ENCODE measurements at regions of chr16 and their contacts with region 1.

Region 1: DNA sequence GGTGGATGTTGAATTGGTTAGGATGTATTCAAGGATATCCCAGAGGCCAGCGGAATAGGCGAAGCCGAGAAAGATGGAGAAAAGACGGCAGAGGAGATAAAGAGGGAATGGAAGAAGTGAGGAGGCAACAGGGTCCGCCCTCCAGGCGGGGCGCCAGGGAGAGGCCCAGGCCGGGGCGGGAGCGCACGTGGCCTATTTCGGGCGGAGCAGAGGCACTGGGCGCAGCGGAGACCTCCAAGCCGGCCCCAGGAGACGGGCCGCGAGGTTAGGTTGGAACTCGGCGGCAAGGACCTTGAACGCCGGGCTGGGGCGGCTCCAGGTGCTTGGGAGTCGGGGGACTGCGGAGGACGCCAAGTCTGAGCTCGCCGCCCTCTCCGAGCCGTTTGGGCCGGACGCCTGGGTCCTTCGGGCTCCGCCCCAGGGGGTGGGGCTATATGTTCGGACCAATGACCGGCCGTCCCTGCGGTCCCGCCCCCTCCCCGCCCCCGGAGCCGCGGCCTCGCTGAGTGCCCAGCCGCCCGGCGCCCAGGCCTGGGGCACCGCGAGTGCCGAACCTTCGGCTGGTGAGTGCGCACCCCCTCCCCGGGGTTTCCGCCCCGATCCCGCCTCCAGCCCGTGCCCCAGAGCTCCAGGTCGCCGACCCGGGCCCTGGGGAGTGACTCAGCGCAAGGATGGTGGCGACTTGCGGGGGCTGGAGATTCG is at the start of gene ZNF771:
- DNase-seq: no peak
- ATAC-seq: peak; percentile 95
- H3K4me3 ChIP-seq: peak within 1 kb of the TSS; percentile 69 to 74
- H3K27ac ChIP-seq: peak within 1 kb of the TSS; percentile 86
- H3K4me1 ChIP-seq: peaks cover 12% of the 10 kb centered on the region; the same call in 1 of the 2 replicates
- H3K27me3 ChIP-seq: no peaks in the 10 kb centered on the region
- CTCF ChIP-seq: no peak
- total RNA-seq, gene ZNF771: 14.4 TPM

Region 2: DNA sequence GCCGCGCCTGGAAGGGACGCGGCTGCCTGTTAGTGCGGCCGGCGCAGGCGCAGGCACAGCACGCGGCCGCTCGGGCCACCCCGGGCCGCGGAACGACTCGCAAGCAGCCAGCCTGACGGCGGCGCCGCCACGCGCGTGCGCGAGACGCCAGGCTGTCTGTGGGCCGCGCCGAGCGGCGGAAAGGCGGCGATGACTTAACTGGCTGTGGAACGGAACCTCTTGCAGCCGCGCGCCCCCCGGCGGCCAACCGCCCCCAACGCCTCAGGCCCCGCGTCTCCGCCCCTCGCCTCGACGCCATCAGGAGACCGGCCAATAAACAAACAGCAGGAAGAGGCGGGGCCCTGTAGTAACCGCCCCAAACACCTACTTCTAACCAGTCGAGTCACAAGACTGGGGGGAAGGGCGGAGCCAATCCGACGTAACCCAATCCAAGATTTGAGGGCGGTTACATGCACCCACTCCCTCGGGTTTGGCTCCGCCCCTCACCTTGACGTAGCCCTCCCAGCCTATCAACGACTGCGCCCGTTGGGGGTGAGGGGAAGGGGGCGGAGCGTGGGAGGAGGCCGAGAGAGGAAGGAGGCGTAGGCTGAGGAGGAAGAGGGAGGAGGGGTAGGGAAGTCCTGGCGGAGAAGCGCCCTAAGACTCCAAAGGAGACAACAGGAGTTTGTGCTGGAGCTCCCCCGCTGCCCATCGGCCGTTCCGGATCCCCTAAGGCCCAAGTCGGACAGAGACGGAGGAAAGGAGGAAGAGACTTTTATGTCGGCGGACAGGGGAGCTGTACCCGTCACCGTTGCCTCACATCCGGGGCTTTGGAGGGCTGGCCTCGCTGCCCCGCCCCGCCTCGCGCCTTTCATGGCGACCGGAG is 250.8 kb after region 1 on chr16 and contains the start of gene FBRS:
- CTCF ChIA-PET with region 1: interaction called, 10 read pairs
- POLR2A ChIA-PET with region 1: no interaction called
- in situ Hi-C with region 1: no loop called
- intact Hi-C with region 1: no loop called
- DNase-seq: peak; percentile 99
- ATAC-seq: peak; percentile 89
- H3K4me3 ChIP-seq: peak within 1 kb of the TSS; percentile 89 to 90
- H3K27ac ChIP-seq: peak within 1 kb of the TSS; percentile 98
- H3K4me1 ChIP-seq: peaks cover 26% of the 10 kb centered on the region
- H3K27me3 ChIP-seq: no peaks in the 10 kb centered on the region
- CTCF ChIP-seq: peak; percentile 97
- total RNA-seq, gene FBRS: 103 TPM